A549 (cell line): ENCODE measurements at regions of chr9 and their contacts with region 1.

Region 1: GRCh38 chr9:21317956-21318923 is 13.1 kb upstream of the IFNA5 start:
- DNase-seq: peak in 1 of 2 experiments; percentile 58
- ATAC-seq: peak; percentile 77 to 94
- H3K4me3 ChIP-seq: no peak overlapping the region
- H3K27ac ChIP-seq: no peak overlapping the region
- H3K4me1 ChIP-seq: no peaks in the 10 kb centered on the region
- CTCF ChIP-seq: peak; percentile 80
- EP300 ChIP-seq: no peak
- POLR2A ChIP-seq: no peak
- RAD21 ChIP-seq: peak; percentile 76

Region 2: DNA sequence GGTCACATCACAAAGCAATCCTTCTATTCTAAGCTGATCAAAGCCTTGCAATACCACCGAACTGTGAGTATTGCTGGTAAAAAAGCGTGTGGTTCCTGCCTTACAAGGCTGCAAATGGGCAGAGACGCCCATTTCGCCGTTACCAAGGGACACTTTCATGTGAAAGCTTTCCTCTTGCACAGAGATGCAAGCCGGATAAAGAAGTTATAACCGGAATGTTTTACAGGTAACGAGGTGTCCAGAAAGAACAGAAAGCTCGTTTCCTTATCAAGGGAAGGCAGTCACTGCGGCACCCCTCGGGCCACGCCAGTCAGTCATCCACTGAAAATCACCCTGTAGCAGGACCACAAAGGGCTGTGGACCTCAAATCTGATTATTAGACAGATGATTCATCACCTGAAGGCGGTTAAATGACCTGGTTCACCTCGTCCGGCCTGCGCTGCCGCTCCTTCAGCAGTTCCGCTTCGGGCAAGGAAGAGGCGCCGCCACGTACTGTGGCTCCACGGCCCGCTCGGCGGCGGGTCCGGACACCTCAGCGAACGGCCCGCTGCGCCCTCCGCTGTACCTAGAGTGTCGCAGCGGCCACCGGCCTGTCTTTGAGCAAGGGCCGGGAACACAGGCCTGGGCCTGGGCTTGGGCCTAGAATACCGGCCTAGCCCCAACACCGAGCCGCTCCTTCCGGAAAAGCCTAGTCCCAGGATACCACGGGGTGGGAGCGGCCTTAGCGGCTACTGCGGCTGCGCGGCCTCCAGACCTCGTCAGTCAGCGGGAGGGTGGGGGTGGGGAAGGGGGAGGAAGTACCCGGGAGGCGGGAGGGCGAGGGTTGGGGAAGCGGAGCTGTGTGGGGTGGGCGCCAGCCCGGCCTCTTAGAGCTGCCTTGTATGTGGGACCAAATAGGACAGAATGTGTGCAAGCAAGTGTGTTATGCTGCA is 16.7 kb after region 1 on chr9 and contains the start of gene KLHL9:
- CTCF ChIA-PET with region 1: interaction called, 12 read pairs
- POLR2A ChIA-PET with region 1: interaction called, 3 read pairs
- DNase-seq: peak; percentile 94 to 97
- ATAC-seq: peak; percentile 97 to 98
- H3K4me3 ChIP-seq: peak within 1 kb of the TSS; percentile 70
- H3K27ac ChIP-seq: peak within 1 kb of the TSS; percentile 95 to 99
- H3K4me1 ChIP-seq: peaks cover 36% of the 10 kb centered on the region
- CTCF ChIP-seq: no peak
- EP300 ChIP-seq: no peak
- POLR2A ChIP-seq: peak; percentile 71
- RAD21 ChIP-seq: no peak
- polyA plus RNA-seq, gene KLHL9: 25.3 and 27.4 TPM in 2 replicates

Region 3: GRCh38 chr9:21923694-21924093 is 605.5 kb after region 1 on chr9:
- CTCF ChIA-PET with region 1: no interaction called
- POLR2A ChIA-PET with region 1: no interaction called
- DNase-seq: no peak
- ATAC-seq: no peak
- H3K4me3 ChIP-seq: no peak overlapping the region
- H3K27ac ChIP-seq: no peak overlapping the region
- H3K4me1 ChIP-seq: no peaks in the 10 kb centered on the region
- CTCF ChIP-seq: no peak
- EP300 ChIP-seq: no peak
- POLR2A ChIP-seq: no peak
- RAD21 ChIP-seq: no peak